PC-9 (cell line): ENCODE measurements at regions of chr11 and their contacts with region 1.

Region 1: GRCh38 chr11:126282736-126283591 is at the start of gene TIRAP:
- DNase-seq: peak; percentile 64 to 68
- H3K4me3 ChIP-seq: peak within 1 kb of the TSS; percentile 83
- H3K27ac ChIP-seq: peak within 1 kb of the TSS; percentile 77
- H3K4me1 ChIP-seq: peaks cover 23% of the 10 kb centered on the region
- H3K27me3 ChIP-seq: no peaks in the 10 kb centered on the region
- CTCF ChIP-seq: no peak
- total RNA-seq, gene TIRAP: 9.6 and 12.7 TPM in 2 replicates

Region 2: GRCh38 chr11:125583496-125583895 is 699.5 kb before region 1 on chr11:
- CTCF ChIA-PET with region 1: no interaction called
- POLR2A ChIA-PET with region 1: no interaction called
- intact Hi-C with region 1: no loop called
- DNase-seq: no peak
- H3K4me3 ChIP-seq: no peak overlapping the region
- H3K27ac ChIP-seq: no peak overlapping the region
- H3K4me1 ChIP-seq: peaks cover 4% of the 10 kb centered on the region; the same call in 1 of the 2 replicates
- H3K27me3 ChIP-seq: no peaks in the 10 kb centered on the region
- CTCF ChIP-seq: no peak

Region 3: GRCh38 chr11:125842321-125842948 is 440.5 kb before region 1 on chr11:
- CTCF ChIA-PET with region 1: no interaction called
- POLR2A ChIA-PET with region 1: no interaction called
- intact Hi-C with region 1: no loop called
- DNase-seq: no peak
- H3K4me3 ChIP-seq: no peak overlapping the region
- H3K27ac ChIP-seq: no peak overlapping the region
- H3K4me1 ChIP-seq: no peaks in the 10 kb centered on the region
- H3K27me3 ChIP-seq: 0 out of 2 replicates have a peak, but pooled peaks cover 5% of the 10 kb centered on the region
- CTCF ChIP-seq: no peak

Region 4: GRCh38 chr11:126378763-126379162 is 95.8 kb after region 1 on chr11:
- CTCF ChIA-PET with region 1: no interaction called
- POLR2A ChIA-PET with region 1: interaction called, 22 read pairs
- intact Hi-C with region 1: no loop called
- DNase-seq: no peak
- H3K4me3 ChIP-seq: no peak overlapping the region
- H3K27ac ChIP-seq: no peak overlapping the region
- H3K4me1 ChIP-seq: peaks cover 32% of the 10 kb centered on the region
- H3K27me3 ChIP-seq: no peaks in the 10 kb centered on the region
- CTCF ChIP-seq: no peak

Region 5: DNA sequence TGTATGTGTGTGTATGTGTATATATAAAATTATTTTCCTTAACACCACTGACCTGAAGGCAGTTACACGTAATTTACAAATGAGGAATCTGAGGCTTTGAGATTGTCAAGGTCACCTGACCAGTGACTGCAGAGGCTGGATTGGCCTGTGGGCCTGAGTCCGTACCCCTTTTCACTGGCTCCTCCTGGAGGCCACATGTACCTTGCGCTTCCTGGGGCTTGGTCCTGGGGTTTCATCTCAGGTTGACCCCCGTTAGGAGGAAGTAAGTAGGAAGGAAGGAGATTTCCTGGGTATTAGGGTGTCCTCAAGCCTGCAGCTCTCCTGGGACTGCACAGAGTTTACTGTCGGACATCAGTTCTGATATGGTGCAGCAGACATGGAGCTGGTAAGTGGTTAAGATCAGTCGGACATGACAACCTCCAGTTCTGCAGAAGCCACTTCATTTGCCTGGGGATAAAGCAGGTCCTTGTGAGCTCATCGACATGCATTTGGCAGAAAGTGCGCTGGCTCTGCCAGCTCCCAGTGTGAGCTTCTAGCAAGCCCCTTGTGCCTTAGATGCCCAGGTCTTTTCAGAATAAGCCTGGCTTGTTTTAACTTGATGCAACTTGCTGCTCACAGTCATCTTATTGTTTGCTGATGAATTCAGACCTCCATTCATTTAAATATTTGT is 109.1 kb after region 1 on chr11:
- CTCF ChIA-PET with region 1: no interaction called
- POLR2A ChIA-PET with region 1: no interaction called
- intact Hi-C with region 1: no loop called
- DNase-seq: no peak
- H3K4me3 ChIP-seq: no peak overlapping the region
- H3K27ac ChIP-seq: no peak overlapping the region
- H3K4me1 ChIP-seq: peaks cover 13% of the 10 kb centered on the region
- H3K27me3 ChIP-seq: no peaks in the 10 kb centered on the region
- CTCF ChIP-seq: no peak